ENCODE measurements at regions of chr1 and their contacts with region 1.

Region 1: GRCh38 chr1:214328770-214329469 is 48.0 kb downstream of the SMYD2 start:
- DNase-seq: peak; percentile 77
- H3K4me3 ChIP-seq: no peak overlapping the region
- H3K27ac ChIP-seq: no peak overlapping the region
- H3K4me1 ChIP-seq: peaks cover 9% of the 10 kb centered on the region
- H3K27me3 ChIP-seq: no peaks in the 10 kb centered on the region
- CTCF ChIP-seq: peak; percentile 84 to 92
- POLR2A ChIP-seq: no peak

Region 2: GRCh38 chr1:213374369-213374768 is 954.6 kb before region 1 on chr1:
- CTCF ChIA-PET with region 1: interaction called, 31 read pairs
- POLR2A ChIA-PET with region 1: no interaction called
- dilution Hi-C with region 1: no loop called
- intact Hi-C with region 1: loop called (anchors 1 kb)
- DNase-seq: peak; percentile 61
- H3K4me3 ChIP-seq: no peak overlapping the region
- H3K27ac ChIP-seq: no peak overlapping the region
- H3K4me1 ChIP-seq: no peaks in the 10 kb centered on the region
- H3K27me3 ChIP-seq: no peaks in the 10 kb centered on the region
- CTCF ChIP-seq: peak; percentile 84 to 95
- POLR2A ChIP-seq: no peak

Region 3: GRCh38 chr1:214224611-214225354 is 104.1 kb before region 1 on chr1:
- CTCF ChIA-PET with region 1: interaction called, 671 read pairs
- POLR2A ChIA-PET with region 1: no interaction called
- dilution Hi-C with region 1: no loop called
- intact Hi-C with region 1: loop called (anchors 2 kb)
- DNase-seq: peak; percentile 31
- H3K4me3 ChIP-seq: peak overlapping the region; percentile 25 to 73 (median 48)
- H3K27ac ChIP-seq: no peak overlapping the region
- H3K4me1 ChIP-seq: peaks cover 7% of the 10 kb centered on the region
- H3K27me3 ChIP-seq: peaks cover 2 to 6% of the 10 kb centered on the region in 2 experiments
- CTCF ChIP-seq: no peak
- POLR2A ChIP-seq: no peak

Region 4: GRCh38 chr1:214316593-214316992 is 12.3 kb before region 1 on chr1:
- CTCF ChIA-PET with region 1: interaction called, 85 read pairs
- POLR2A ChIA-PET with region 1: no interaction called
- dilution Hi-C with region 1: no loop called
- intact Hi-C with region 1: no loop called
- DNase-seq: no peak
- H3K4me3 ChIP-seq: no peak overlapping the region
- H3K27ac ChIP-seq: no peak overlapping the region
- H3K4me1 ChIP-seq: no peaks in the 10 kb centered on the region
- H3K27me3 ChIP-seq: no peaks in the 10 kb centered on the region
- CTCF ChIP-seq: no peak
- POLR2A ChIP-seq: no peak

Region 5: DNA sequence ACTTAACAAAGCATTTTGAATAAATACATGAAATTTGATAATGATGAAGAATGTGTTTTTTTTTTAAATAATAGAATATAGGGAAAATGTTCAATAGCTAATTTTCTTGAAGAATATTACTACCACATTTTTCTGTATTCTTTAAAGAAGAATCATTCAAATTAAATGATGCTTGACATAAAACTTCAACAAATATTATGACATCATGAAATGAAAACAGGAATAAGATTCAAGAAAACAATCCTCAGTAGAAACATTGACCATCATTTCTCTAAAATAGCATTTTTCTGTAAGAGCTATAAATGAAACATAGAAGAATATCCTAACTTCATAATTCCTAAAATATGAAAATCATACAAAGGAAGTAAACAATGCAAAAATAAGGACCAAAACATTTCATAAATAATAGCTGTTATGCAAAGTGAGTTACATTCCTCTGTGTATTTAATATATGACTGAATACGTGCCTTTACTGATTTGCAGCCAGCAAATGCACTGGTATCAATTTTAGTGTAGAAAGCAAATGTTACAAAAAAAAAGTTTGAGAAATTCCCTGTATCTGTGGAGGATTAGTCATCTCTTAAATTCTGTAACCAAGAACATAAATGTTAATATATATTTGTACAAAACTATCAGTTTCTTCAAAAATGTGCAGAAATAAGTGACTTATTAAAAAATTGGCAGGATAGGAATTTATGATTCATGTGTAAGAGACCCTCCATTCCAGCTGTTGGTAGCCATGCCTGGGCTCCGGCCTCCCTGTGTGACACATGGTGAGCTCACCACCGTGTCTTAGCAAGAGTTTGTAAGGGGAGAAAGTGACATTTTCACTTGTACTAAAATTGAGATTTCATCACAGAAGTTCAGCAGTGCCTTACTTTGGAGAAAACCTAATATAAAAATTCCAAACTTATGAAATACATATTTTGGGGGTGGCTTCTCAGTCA is 237.5 kb after region 1 on chr1:
- CTCF ChIA-PET with region 1: interaction called, 13 read pairs
- POLR2A ChIA-PET with region 1: no interaction called
- dilution Hi-C with region 1: no loop called
- intact Hi-C with region 1: no loop called
- DNase-seq: peak; percentile 67
- H3K4me3 ChIP-seq: no peak overlapping the region
- H3K27ac ChIP-seq: peak overlapping the region; percentile 33
- H3K4me1 ChIP-seq: peaks cover 48% of the 10 kb centered on the region
- H3K27me3 ChIP-seq: no peaks in the 10 kb centered on the region
- CTCF ChIP-seq: no peak
- POLR2A ChIP-seq: no peak

Region 6: GRCh38 chr1:214615871-214616270 is 287.0 kb after region 1 on chr1:
- CTCF ChIA-PET with region 1: interaction called, 18 read pairs
- POLR2A ChIA-PET with region 1: no interaction called
- dilution Hi-C with region 1: no loop called
- intact Hi-C with region 1: no loop called
- DNase-seq: peak; percentile 20
- H3K4me3 ChIP-seq: no peak overlapping the region
- H3K27ac ChIP-seq: no peak overlapping the region
- H3K4me1 ChIP-seq: peaks cover 26% of the 10 kb centered on the region
- H3K27me3 ChIP-seq: no peaks in the 10 kb centered on the region
- CTCF ChIP-seq: no peak
- POLR2A ChIP-seq: no peak

Region 7: DNA sequence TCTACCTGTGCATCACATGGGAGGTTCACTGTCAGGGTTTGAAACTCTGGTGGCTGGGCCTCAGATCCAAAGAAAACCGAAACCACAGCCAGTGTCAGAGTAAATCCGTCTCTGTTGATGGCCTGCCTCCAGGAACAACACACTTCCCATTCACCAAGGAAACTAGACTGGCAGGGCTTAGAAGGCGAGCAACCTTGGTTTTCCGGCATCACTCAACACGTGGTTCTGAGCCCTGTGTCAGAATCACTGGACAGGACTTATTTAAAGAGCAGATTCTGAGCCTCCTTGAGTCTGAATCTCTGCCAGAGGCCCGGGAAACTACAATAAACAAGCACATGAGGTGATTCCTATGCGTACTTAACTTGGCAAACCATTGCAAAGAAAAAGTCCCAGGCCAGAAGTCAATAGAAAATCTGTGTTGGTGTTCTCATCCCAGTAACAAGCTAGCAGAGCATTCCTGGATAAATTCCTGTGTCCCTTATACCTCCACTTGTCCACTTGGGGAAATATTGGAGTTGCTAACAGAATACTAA is 1308.2 kb after region 1 on chr1:
- CTCF ChIA-PET with region 1: no interaction called
- POLR2A ChIA-PET with region 1: no interaction called
- dilution Hi-C with region 1: no loop called
- intact Hi-C with region 1: no loop called
- DNase-seq: no peak
- H3K4me3 ChIP-seq: no peak overlapping the region
- H3K27ac ChIP-seq: no peak overlapping the region
- H3K4me1 ChIP-seq: no peaks in the 10 kb centered on the region
- H3K27me3 ChIP-seq: no peaks in the 10 kb centered on the region
- CTCF ChIP-seq: no peak
- POLR2A ChIP-seq: no peak